ENCODE measurements at regions of chr16 and their contacts with region 1.

Region 1: GRCh38 chr16:72942021-72942420 is 105.9 kb downstream of the ZFHX3 start:
- DNase-seq: no peak

Region 2: GRCh38 chr16:72908362-72909167 is 33.5 kb before region 1 on chr16:
- intact Hi-C with region 1: no loop called
- DNase-seq: peak; percentile 67

Region 3: GRCh38 chr16:72978212-72978611 is 36.2 kb after region 1 on chr16:
- intact Hi-C with region 1: loop called in 1 of 2 experiments (anchors 5 kb)
- DNase-seq: no peak